AG04449 (cell line): ENCODE measurements at regions of chr6 and their contacts with region 1.

Region 1: GRCh38 chr6:149513915-149514314 is 29.1 kb upstream of the ZC3H12D start:
- DNase-seq: no peak
- H3K4me3 ChIP-seq: no peak overlapping the region
- CTCF ChIP-seq: no peak

Region 2: DNA sequence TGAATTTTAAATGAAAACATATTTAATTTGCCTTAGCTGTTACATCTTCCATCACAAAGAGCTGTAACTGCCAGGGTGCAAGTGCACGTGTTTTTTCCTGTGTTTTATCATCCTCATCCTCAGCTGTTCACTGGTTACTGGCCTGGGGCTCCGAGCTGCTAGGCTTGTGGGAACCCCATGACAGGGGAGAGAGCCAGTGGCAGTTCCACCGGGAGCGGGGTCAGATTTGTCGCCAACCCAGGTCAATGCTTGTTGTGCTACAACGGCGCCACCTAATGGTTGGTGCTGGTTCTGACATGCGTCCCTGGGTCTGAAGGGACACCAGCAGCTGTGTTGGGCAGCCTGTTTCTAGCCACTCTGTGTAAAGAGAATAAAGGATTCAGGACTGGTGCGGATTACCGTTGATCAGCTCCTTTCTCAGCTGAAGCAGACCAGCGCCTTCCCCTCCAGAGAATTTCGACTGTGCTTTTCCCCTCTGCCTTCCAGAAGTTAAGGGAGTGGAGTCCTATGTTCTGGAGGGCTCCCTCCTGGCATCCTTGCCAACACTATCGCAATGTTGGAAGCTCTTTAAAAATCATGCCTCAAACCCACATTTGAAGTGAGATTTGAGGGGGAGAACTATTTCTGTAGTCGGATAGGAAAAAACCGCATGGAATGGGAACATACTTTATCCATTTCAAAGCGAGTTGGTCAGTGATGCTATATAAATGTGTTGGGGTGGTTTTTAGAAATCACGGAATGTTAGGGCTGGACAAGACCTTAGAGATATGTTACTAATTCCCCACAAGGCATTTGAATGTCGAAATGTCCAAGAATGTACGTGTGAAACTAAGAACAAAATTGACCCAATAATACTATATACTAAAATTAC is 81.8 kb before region 1 on chr6:
- CTCF ChIA-PET with region 1: interaction called, 20 read pairs
- POLR2A ChIA-PET with region 1: no interaction called
- DNase-seq: no peak
- H3K4me3 ChIP-seq: no peak overlapping the region
- CTCF ChIP-seq: peak; percentile 93

Region 3: GRCh38 chr6:149454386-149454848 is 59.5 kb before region 1 on chr6:
- CTCF ChIA-PET with region 1: interaction called, 14 read pairs
- POLR2A ChIA-PET with region 1: no interaction called
- DNase-seq: peak; percentile 57
- H3K4me3 ChIP-seq: no peak overlapping the region
- CTCF ChIP-seq: no peak

Region 4: DNA sequence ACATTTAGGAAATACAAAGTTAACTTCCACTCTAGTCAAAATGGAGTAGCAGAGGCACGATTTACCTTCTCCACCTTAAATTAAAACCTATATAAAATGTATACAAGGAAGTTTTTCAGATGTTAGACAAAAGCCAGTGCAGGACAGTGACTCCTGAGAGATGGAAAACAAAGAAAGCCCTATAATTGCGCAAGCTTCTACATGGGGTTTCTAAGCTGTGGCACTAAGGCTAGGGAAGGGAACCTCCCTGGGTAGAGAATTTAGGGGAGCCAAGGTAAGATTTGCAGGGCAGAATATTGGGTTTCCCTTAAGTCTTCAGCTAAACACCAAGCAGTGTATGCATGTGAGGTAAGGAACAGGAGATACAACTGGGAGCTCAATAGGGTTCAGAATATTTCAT is 10.6 kb before region 1 on chr6:
- CTCF ChIA-PET with region 1: interaction called, 20 read pairs
- POLR2A ChIA-PET with region 1: no interaction called
- DNase-seq: no peak
- H3K4me3 ChIP-seq: no peak overlapping the region
- CTCF ChIP-seq: no peak

Region 5: DNA sequence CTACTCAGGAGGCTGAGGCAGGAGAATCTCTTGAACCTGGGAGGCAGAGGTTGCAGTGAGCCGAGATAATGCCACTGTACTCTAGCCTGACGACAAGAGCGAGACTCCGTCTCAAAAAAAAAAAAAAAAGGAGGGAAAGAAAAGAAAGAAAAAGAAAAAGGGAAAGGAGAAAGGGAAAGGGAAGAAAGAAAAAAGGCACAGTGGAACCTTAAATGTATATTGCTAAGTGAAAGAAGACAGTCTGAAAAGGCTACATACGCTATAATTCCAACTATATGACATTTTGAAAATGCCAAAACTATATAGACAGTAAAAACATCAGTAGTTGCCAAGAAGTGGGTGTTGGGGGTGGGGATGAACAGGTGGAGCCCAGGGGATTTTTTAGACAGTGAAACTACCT is 15.7 kb after region 1 on chr6:
- CTCF ChIA-PET with region 1: interaction called, 52 read pairs
- POLR2A ChIA-PET with region 1: no interaction called
- DNase-seq: no peak
- H3K4me3 ChIP-seq: no peak overlapping the region
- CTCF ChIP-seq: no peak

Region 6: GRCh38 chr6:149534742-149535141 is 20.8 kb after region 1 on chr6:
- CTCF ChIA-PET with region 1: interaction called, 52 read pairs
- POLR2A ChIA-PET with region 1: no interaction called
- DNase-seq: no peak
- H3K4me3 ChIP-seq: no peak overlapping the region
- CTCF ChIP-seq: no peak

Region 7: DNA sequence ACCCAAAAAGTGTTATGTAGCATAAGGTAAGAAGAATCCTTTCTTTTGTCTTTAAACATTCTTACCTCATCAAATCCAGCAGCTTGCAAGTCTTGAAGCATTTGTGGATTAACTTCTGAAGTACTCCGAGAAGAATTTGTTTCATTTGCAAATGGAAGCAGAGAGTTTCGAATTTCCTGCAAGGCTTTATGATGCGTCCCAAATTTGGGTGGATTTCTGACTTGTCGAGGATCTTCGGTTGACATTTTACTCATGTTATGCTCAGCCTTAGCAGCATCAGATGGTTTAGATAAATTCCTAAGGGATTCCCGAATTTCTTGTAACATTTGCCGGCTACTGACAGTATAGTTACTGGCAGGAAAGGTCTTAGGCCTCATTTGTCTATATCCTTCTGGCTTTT is 187.8 kb after region 1 on chr6:
- CTCF ChIA-PET with region 1: no interaction called
- POLR2A ChIA-PET with region 1: no interaction called
- DNase-seq: no peak
- H3K4me3 ChIP-seq: no peak overlapping the region
- CTCF ChIP-seq: no peak